ENCODE measurements at regions of chr18 and their contacts with region 1.

Region 1: DNA sequence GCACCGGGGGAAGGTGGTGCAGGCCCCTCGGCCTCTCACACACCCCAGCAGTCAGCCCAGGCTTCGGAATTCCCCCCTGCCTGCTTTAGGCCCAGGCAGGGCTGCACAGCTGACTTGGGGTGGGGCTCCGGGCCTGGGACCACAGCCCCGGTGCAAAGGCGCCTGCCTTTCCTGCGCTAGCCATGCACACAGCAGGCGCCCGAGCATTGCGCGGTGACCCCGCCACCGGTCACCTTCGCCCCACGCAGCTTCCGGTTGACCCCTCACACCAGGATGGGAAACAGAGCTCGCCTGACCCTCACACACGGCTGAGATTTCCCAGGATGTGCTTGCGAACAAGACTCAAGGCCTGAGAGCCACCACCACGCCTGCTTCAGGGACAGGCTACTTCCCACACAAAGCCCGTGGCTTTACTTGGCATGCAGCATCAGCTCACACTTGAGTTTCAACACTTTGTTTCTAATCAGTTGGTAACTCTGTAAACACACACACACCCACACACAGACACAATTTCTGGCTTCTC is 46.0 kb downstream of the SLC66A2 start:
- DNase-seq: no peak
- H3K4me3 Mint-ChIP-seq: no peak overlapping the region
- H3K27ac Mint-ChIP-seq: peak overlapping the region; percentile 90
- H3K4me1 Mint-ChIP-seq: peaks cover 18% of the 10 kb centered on the region
- H3K27me3 Mint-ChIP-seq: no peaks in the 10 kb centered on the region

Region 2: GRCh38 chr18:79422022-79422782 is 483.2 kb before region 1 on chr18:
- intact Hi-C with region 1: no loop called
- DNase-seq: no peak
- H3K4me3 Mint-ChIP-seq: no peak overlapping the region
- H3K27ac Mint-ChIP-seq: no peak overlapping the region
- H3K4me1 Mint-ChIP-seq: peaks cover 13% of the 10 kb centered on the region
- H3K27me3 Mint-ChIP-seq: no peaks in the 10 kb centered on the region

Region 3: GRCh38 chr18:79933765-79934164 is 28.3 kb after region 1 on chr18:
- intact Hi-C with region 1: no loop called
- DNase-seq: no peak
- H3K4me3 Mint-ChIP-seq: no peak overlapping the region
- H3K27ac Mint-ChIP-seq: no peak overlapping the region
- H3K4me1 Mint-ChIP-seq: no peaks in the 10 kb centered on the region
- H3K27me3 Mint-ChIP-seq: no peaks in the 10 kb centered on the region

Region 4: GRCh38 chr18:79944126-79944741 is 38.8 kb after region 1 on chr18:
- intact Hi-C with region 1: loop called (anchors 1 kb)
- DNase-seq: no peak
- H3K4me3 Mint-ChIP-seq: peak overlapping the region; percentile 5
- H3K27ac Mint-ChIP-seq: peak overlapping the region; percentile 63
- H3K4me1 Mint-ChIP-seq: peaks cover 24% of the 10 kb centered on the region
- H3K27me3 Mint-ChIP-seq: no peaks in the 10 kb centered on the region

Region 5: GRCh38 chr18:79964330-79965118 is 59.1 kb after region 1 on chr18 and contains the start of gene HSBP1L1:
- intact Hi-C with region 1: loop called (anchors 5 kb)
- DNase-seq: peak; percentile 65
- H3K4me3 Mint-ChIP-seq: peak within 1 kb of the TSS; percentile 76
- H3K27ac Mint-ChIP-seq: peak within 1 kb of the TSS; percentile 75
- H3K4me1 Mint-ChIP-seq: peaks cover 40% of the 10 kb centered on the region
- H3K27me3 Mint-ChIP-seq: no peaks in the 10 kb centered on the region
- total RNA-seq, gene HSBP1L1: 12.0 and 15.5 TPM in 2 replicates

Region 6: GRCh38 chr18:80210312-80211083 is 305.0 kb after region 1 on chr18:
- intact Hi-C with region 1: no loop called
- DNase-seq: no peak
- H3K4me3 Mint-ChIP-seq: no peak overlapping the region
- H3K27ac Mint-ChIP-seq: no peak overlapping the region
- H3K4me1 Mint-ChIP-seq: peaks cover 2% of the 10 kb centered on the region
- H3K27me3 Mint-ChIP-seq: peaks cover 35% of the 10 kb centered on the region

Measured in activated T-helper 2 cell treated with anti-CD3 and anti-CD28 coated beads, Interferon-gamma antibody, Interleukin-2, Interleukin-4, amounts not matched to agents 10 μg/mL and 5 μg/mL and 100 μg/mL, durations not matched to agents 14 hours and 24 hours and 36 hours (primary cell).